Upper lobe of right lung (tissue), 1 donor: ENCODE measurements at regions of chr3 and their contacts with region 1.

Region 1: GRCh38 chr3:17431004-17431403 is 311.4 kb downstream of the TBC1D5 start:
- DNase-seq: no peak
- ATAC-seq: peak; percentile 59
- H3K4me3 ChIP-seq: no peak overlapping the region
- H3K27ac ChIP-seq: no peak overlapping the region
- H3K4me1 ChIP-seq: no peaks in the 10 kb centered on the region
- H3K27me3 ChIP-seq: no peaks in the 10 kb centered on the region
- CTCF ChIP-seq: peak; percentile 50

Region 2: GRCh38 chr3:17655743-17656142 is 224.7 kb after region 1 on chr3:
- intact Hi-C with region 1: no loop called
- DNase-seq: no peak
- ATAC-seq: no peak
- H3K4me3 ChIP-seq: no peak overlapping the region
- H3K27ac ChIP-seq: no peak overlapping the region
- H3K4me1 ChIP-seq: no peaks in the 10 kb centered on the region
- H3K27me3 ChIP-seq: no peaks in the 10 kb centered on the region
- CTCF ChIP-seq: no peak

Region 3: GRCh38 chr3:17841190-17841828 is 410.3 kb after region 1 on chr3:
- intact Hi-C with region 1: loop called (anchors 5 kb)
- DNase-seq: peak; percentile 83
- ATAC-seq: peak; percentile 95
- H3K4me3 ChIP-seq: no peak overlapping the region
- H3K27ac ChIP-seq: no peak overlapping the region
- H3K4me1 ChIP-seq: no peaks in the 10 kb centered on the region
- H3K27me3 ChIP-seq: no peaks in the 10 kb centered on the region
- CTCF ChIP-seq: peak; percentile 94